Activated B cell treated with CpG ODN at 0.5 μM for 24 hours (primary cell): ENCODE measurements at regions of chr19 and their contacts with region 1.

Region 1: DNA sequence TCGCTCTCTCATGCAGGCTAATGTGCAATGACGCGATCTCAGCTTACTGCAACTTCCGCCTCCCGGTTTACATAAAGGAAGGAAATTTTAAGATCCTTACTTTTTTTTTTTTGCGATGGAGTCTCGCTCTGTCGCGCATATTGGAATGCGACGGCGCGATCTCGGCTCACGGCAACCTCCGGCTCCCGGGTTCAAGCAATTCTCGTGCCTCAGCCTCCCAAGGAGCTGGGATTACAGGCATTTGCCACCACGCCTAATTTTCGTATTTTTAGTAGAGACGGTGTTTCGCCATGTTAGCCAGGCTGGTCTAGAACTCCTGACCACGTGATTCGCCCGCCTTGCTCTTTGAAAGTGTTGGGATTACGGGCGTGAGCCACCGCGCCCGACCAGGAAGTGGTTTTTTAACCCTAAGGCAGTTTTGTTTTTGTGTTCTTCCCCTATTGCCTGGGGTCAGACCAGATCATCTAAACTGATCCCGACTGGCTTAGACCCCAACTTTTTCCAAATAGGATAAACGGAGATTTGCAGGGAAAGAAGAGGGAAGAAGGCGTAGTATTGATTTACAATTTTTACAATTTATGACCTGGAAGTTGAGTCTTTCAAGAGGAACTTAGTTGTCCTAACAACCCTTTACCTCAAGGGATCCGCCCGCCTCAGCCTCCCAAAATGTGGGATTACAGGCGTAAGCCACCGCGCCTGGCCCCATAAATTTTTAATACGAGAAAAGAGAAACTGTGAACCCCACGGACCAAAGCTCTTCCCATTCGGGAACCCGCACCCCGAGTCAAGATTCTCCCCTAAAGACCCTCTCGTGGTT is 142.0 kb downstream of the ZNF737 start:
- DNase-seq: peak; percentile 24
- ATAC-seq: no peak
- H3K4me3 Mint-ChIP-seq: peak overlapping the region; percentile 99
- H3K27ac Mint-ChIP-seq: peak overlapping the region; percentile 98
- H3K4me1 Mint-ChIP-seq: peaks cover 15% of the 10 kb centered on the region
- H3K27me3 Mint-ChIP-seq: no peaks in the 10 kb centered on the region
- CTCF ChIP-seq: no peak

Region 2: GRCh38 chr19:19540715-19541440 is 882.7 kb before region 1 on chr19:
- CTCF ChIA-PET with region 1: no interaction called
- POLR2A ChIA-PET with region 1: interaction called, 13 read pairs
- intact Hi-C with region 1: no loop called
- DNase-seq: peak; percentile 55
- ATAC-seq: peak; percentile 78
- H3K4me3 Mint-ChIP-seq: peak overlapping the region; percentile 68
- H3K27ac Mint-ChIP-seq: no peak overlapping the region
- H3K4me1 Mint-ChIP-seq: peaks cover 28% of the 10 kb centered on the region
- H3K27me3 Mint-ChIP-seq: peaks cover 20% of the 10 kb centered on the region
- CTCF ChIP-seq: no peak

Region 3: GRCh38 chr19:20237761-20238623 is 185.6 kb before region 1 on chr19:
- CTCF ChIA-PET with region 1: no interaction called
- POLR2A ChIA-PET with region 1: no interaction called
- intact Hi-C with region 1: loop called (anchors 10 kb)
- DNase-seq: peak; percentile 79
- ATAC-seq: peak; percentile 94
- H3K4me3 Mint-ChIP-seq: peak overlapping the region; percentile 100
- H3K27ac Mint-ChIP-seq: peak overlapping the region; percentile 93
- H3K4me1 Mint-ChIP-seq: peaks cover 23% of the 10 kb centered on the region
- H3K27me3 Mint-ChIP-seq: no peaks in the 10 kb centered on the region
- CTCF ChIP-seq: no peak

Region 4: DNA sequence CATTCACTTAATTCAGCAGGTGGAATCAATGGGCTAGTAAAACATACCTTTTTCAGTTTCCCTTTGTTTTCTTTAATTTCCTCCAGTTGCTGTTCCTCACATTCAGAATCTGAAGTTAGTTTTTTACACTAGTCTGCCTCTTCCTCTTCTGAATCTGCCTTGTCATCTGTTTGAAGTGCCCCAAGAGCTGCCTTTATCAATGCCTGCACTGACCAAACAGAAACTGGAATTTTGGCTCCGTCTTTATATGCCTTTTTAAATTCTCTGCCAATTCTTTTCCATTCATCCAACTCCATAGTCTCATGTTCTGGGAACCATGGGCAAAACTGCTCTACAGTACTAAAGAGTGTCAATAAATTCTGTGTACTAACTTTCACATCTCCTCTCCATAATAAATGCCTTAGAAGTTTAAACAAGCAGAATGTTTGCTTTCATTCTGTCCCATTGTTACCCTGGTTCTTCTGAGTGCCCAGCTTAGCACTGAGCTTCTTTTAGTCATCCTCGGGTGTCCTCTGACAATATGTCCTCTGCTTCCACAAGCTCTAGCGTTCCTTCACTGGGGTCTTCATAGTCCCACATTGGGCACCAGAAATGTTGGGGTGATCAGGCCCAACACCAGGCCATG is 102.3 kb before region 1 on chr19:
- CTCF ChIA-PET with region 1: no interaction called
- POLR2A ChIA-PET with region 1: no interaction called
- intact Hi-C with region 1: no loop called
- DNase-seq: no peak
- ATAC-seq: no peak
- H3K4me3 Mint-ChIP-seq: no peak overlapping the region
- H3K27ac Mint-ChIP-seq: no peak overlapping the region
- H3K4me1 Mint-ChIP-seq: no peaks in the 10 kb centered on the region
- H3K27me3 Mint-ChIP-seq: no peaks in the 10 kb centered on the region
- CTCF ChIP-seq: no peak

Region 5: DNA sequence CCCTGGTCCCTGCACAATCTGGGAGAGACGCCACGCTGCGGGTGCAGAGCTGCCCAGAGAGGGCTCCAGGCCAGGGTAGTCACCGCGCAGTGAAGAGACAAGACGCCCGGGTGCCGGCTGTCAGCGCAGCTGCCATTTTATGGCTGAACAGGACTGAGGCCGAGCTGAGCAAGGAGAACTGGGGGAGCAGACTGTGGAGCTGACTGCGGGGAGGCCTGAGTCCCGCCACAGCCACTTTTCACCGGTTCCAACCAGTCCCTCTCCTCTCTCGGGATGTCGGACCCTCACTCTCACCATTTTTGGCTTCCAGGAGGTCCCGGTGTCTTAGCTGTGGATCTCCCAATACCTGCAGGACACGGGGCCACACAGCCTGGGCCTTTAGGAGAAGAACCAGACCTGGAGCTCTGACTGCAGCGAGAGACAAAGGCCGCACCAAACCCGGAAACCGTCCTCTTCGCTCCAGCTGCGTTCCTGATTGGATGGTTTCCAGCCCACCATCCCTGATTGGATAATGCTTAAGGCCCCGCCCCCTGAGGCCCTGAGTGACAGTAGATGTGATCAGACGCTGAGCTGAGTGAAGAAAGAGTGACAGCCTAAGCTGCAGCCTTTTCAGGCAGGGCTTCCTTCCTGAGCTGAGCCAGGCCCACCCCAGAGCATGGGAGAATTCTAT is 237.7 kb after region 1 on chr19 and contains the start of gene ZNF626:
- CTCF ChIA-PET with region 1: no interaction called
- POLR2A ChIA-PET with region 1: interaction called, 28 read pairs
- intact Hi-C with region 1: loop called (anchors 1 kb)
- DNase-seq: peak; percentile 80
- ATAC-seq: peak; percentile 98
- H3K4me3 Mint-ChIP-seq: peak within 1 kb of the TSS; percentile 95
- H3K27ac Mint-ChIP-seq: peak within 1 kb of the TSS; percentile 95
- H3K4me1 Mint-ChIP-seq: peaks cover 49% of the 10 kb centered on the region
- H3K27me3 Mint-ChIP-seq: no peaks in the 10 kb centered on the region
- CTCF ChIP-seq: no peak
- total RNA-seq, gene ZNF626: 16.1 and 17.2 TPM in 2 replicates

Region 6: DNA sequence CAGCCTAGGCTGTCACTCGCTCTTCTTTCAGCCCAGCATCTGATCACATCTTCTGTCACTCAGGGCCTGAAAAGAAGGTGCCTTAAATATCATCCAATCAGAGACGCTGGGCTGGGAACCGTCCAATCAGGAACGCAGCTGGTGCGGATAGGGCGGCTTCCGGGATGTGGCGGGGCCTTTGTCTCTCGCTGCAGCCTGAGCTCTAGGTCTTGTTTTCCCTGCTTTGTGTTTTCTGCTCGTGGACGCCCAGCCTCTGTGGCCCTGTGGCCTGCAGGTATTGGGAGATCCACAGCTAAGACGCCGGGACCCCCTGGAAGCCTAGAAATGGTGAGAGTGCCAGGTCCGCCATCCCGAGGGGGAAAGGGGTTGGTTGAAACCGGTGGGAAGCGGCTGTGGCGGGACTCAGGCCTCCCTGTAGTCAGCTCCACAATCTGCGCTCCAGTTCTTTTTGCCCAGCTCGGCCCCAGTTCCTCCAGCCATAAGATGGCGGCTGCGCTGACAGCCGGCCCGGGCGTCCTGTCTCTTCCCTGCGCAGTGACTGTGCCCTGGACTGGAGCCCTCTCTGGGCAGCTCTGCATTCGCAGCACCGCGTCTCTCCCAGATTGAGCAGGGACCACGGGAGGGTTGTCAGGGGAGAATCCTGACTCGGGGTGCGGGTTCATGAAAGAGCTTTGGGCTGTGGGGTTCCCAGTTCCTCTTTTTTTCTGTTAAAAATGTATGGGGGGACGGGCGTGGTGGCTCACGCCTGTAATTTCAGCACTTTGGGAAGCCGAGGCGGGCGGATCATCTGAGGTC is 499.7 kb after region 1 on chr19 and contains the start of gene ZNF85:
- CTCF ChIA-PET with region 1: no interaction called
- POLR2A ChIA-PET with region 1: interaction called, 11 read pairs
- intact Hi-C with region 1: loop called (anchors 2 kb)
- DNase-seq: peak; percentile 76
- ATAC-seq: peak; percentile 97
- H3K4me3 Mint-ChIP-seq: peak within 1 kb of the TSS; percentile 98
- H3K27ac Mint-ChIP-seq: peak within 1 kb of the TSS; percentile 96
- H3K4me1 Mint-ChIP-seq: peaks cover 13% of the 10 kb centered on the region
- H3K27me3 Mint-ChIP-seq: no peaks in the 10 kb centered on the region
- CTCF ChIP-seq: no peak
- total RNA-seq, gene ZNF85: 15.0 and 18.1 TPM in 2 replicates

Region 7: DNA sequence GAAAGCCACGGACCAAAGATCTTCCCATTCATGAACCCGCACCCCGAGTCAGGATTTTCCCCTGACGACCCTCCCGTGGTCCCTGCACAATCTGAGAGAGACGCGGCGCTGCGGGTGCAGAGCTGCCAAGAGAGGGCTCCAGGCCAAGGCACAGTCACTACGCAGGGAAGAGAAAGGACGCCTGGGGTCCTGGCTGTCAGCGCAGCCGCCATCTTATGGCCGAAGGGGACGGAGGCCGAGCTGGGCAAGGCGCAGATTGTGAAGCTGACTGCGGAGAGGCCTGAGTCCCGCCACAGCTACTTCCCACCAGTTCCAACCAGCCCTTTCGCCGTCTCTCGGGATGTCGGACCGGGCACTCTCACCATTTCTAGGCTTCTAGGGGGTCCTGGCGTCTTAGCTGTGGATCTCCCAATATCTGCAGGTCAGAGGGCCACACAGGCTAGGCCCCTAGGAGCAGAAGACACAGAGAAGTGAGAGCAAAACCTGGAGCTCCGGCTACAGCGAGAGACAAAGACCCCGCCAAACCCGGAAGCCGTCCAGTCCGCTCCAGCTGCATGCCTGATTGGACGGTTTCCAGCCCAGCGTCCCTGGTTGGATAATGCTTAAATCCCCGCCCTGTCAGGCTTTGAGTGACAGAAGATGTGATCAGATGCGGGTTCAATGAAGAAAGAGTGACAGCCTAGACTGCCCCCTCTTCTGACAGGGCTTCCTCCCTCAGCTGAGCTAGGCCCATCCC is 1343.6 kb after region 1 on chr19 and contains the start of gene ZNF100:
- CTCF ChIA-PET with region 1: no interaction called
- POLR2A ChIA-PET with region 1: interaction called, 4 read pairs
- intact Hi-C with region 1: loop called (anchors 5 kb)
- DNase-seq: peak; percentile 70
- ATAC-seq: peak; percentile 98
- H3K4me3 Mint-ChIP-seq: peak within 1 kb of the TSS; percentile 95
- H3K27ac Mint-ChIP-seq: peak within 1 kb of the TSS; percentile 88
- H3K4me1 Mint-ChIP-seq: peaks cover 18% of the 10 kb centered on the region
- H3K27me3 Mint-ChIP-seq: no peaks in the 10 kb centered on the region
- CTCF ChIP-seq: no peak
- total RNA-seq, gene ZNF100: 21.1 and 22.4 TPM in 2 replicates